ENCODE measurements at regions of chr11 and their contacts with region 1.

Region 1: DNA sequence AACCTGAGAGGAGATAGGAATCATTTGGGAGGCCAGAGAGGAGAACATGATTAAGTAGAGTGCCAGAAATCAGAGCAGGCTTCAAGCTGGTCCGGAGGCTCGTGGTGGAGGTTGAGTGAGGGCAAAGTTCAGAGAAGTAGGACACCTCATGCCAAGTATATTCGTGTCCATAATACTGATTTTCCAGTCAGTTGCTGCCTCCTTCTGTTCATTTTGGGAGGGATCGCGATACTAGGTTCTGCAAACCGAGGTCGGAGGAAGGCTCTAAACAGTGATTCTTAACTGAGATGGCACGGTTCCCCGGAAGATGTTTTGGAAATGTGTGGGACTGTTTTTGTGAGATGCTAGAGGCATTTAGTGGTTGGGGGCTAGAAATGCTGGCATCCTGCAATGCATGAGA is 13.6 kb upstream of the CD3E start:
- DNase-seq: peak in 3 of 6 donors; percentile 37 to 61 (median 49)
- ATAC-seq: peak; percentile 83 to 97 (median 94)
- H3K4me3 ChIP-seq: no peak overlapping the region
- H3K27ac ChIP-seq: no peak overlapping the region
- H3K4me1 ChIP-seq: no peaks in the 10 kb centered on the region
- H3K27me3 ChIP-seq: peaks cover 0 to 7% (median 1%) of the 10 kb centered on the region in 4 donors
- CTCF ChIP-seq: peak in 3 of 4 donors; percentile 27 to 32 (median 32)

Region 2: GRCh38 chr11:118145285-118146227 is 145.4 kb before region 1 on chr11:
- intact Hi-C with region 1: loop called in 1 of 3 experiments (anchors 5 kb)
- DNase-seq: peak; percentile 86 to 96 (median 92)
- ATAC-seq: peak; percentile 98 to 99 (median 99)
- H3K4me3 ChIP-seq: peak overlapping the region; percentile 39 to 67 (median 59)
- H3K27ac ChIP-seq: no peak overlapping the region
- H3K4me1 ChIP-seq: no peaks in the 10 kb centered on the region
- H3K27me3 ChIP-seq: no peaks in the 10 kb centered on the region
- CTCF ChIP-seq: peak; percentile 86 to 91 (median 89)

Region 3: GRCh38 chr11:118488480-118489109 is 197.7 kb after region 1 on chr11:
- intact Hi-C with region 1: loop called in 1 of 3 experiments (anchors 10 kb)
- DNase-seq: peak; percentile 50 to 75 (median 60)
- ATAC-seq: peak; percentile 73 to 90 (median 85)
- H3K4me3 ChIP-seq: no peak overlapping the region
- H3K27ac ChIP-seq: no peak overlapping the region
- H3K4me1 ChIP-seq: no peaks in the 10 kb centered on the region
- H3K27me3 ChIP-seq: no peaks in the 10 kb centered on the region
- CTCF ChIP-seq: peak; percentile 36 to 65 (median 52)